GM12878 (cell line): ENCODE measurements at regions of chr1 and their contacts with region 1.

Region 1: DNA sequence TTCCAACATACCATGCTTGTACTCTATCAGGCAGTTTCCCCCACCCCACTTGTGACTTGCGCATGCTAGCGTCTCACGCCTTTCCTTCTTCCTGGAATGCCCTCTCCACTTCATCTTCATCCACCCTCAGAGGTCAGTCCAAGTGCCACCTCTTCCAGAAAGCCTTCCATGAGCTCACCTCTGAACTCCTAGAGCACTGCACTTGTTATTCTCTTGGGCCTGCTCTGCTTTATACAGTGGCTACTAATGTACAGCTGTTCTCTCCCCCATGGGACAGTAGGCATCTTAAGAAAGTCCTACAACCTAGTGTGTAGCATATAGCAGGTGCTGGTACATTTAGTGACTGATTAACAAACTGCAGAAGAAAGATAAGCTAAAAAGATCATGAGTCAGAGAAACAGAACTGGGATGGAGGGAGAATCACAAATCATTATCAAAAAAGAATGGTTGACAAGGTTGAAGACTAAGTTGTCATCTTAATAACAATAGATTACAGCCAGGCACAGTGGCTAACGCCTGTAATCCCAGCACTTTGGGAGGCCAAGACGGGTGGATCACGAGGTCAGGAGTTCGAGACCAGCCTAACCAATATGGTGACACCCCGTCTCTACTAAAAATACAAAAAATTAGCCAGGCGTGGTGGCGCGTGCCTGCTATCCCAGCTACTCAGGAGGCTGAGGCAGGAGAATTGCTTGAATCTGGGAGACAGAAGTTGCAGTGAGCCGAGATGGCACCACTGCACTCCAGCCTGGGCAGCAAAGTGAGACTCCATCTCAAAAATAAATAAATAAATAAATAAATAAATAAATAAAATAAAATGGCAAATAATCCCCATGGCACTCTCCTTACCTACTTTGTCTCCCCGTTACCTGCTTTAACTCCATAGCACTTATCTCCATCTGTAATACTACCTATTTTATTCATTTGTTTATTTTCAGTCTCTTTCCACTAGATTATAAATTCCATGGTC is 16.3 kb upstream of the TSPAN1 start:
- DNase-seq: no peak
- ATAC-seq: peak; percentile 66
- H3K4me3 ChIP-seq: no peak overlapping the region
- H3K27ac ChIP-seq: no peak overlapping the region
- H3K4me1 ChIP-seq: peaks cover 10% of the 10 kb centered on the region
- H3K27me3 ChIP-seq: no peaks in the 10 kb centered on the region
- CTCF ChIP-seq: no peak
- EP300 ChIP-seq: no peak
- POLR2A ChIP-seq: no peak
- RAD21 ChIP-seq: no peak

Region 2: DNA sequence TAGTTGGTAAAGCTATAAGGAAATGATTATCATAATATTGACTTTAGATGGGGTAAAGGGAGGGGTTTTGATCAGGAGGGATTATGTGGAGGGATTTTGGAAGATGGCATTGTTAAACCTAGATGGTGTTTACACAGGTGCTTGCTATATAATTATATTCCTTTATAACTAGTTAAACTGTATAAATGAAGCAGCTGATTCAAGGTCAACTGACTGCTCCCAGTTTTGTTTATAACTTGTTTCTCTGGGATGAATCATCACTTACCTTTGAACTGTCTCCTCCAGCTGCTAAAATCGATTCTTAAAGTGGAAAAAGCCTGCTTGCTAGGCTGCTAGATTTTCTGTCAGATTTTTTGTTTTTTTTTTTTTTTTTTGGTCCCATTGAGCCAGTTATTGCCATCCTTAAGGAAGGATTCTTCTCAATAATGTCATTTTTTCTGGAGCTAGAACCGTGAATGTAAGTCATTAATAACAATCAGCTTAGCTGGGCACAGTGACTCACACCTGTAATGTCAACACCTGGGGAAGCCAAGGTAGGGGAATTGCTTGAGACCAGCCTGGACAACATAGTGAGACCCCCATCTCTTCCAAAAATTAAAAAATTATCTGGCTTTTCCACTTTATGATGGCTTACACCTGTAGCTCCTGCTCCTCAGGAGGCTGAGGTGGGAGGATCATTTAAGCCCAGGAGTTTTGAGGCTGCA is 179.4 kb before region 1 on chr1:
- CTCF ChIA-PET with region 1: no interaction called
- POLR2A ChIA-PET with region 1: no interaction called
- RAD21 ChIA-PET with region 1: no interaction called
- SMC1A ChIA-PET with region 1: no interaction called
- in situ Hi-C with region 1: no loop called
- intact Hi-C with region 1: no loop called
- DNase-seq: no peak
- ATAC-seq: no peak
- H3K4me3 ChIP-seq: no peak overlapping the region
- H3K27ac ChIP-seq: no peak overlapping the region
- H3K4me1 ChIP-seq: no peaks in the 10 kb centered on the region
- H3K27me3 ChIP-seq: no peaks in the 10 kb centered on the region
- CTCF ChIP-seq: no peak
- EP300 ChIP-seq: no peak
- POLR2A ChIP-seq: no peak
- RAD21 ChIP-seq: no peak

Region 3: DNA sequence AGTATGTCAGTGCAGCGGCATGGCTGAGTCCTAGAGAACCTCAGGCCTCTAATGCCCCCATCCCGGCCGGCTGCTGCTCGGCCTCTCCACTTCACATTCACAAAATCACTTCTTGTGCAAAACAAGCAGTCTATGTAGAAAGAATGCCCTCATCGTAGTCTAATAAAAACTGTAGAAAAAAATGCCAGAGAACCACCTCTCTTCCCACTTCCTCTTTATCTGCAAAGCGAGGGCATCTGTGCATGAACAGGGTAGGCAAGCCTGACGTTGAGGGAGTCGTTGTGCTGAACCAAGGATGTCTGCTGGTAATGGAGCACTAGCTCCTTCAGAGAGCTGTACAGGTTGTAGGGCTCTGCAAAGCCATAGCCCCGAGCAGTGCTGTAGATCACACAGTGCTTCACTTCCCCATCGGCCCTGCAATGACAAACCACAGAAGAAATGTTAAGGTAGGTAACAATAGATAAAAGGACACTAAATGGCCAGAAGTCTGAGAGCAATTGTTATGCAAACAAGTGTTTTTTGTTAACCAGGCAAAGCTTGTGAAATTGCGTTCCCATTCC is 115.1 kb before region 1 on chr1:
- CTCF ChIA-PET with region 1: interaction called, 3 read pairs
- POLR2A ChIA-PET with region 1: no interaction called
- RAD21 ChIA-PET with region 1: interaction called, 3 read pairs
- SMC1A ChIA-PET with region 1: interaction called, 12 read pairs
- in situ Hi-C with region 1: no loop called
- intact Hi-C with region 1: no loop called
- DNase-seq: peak; percentile 92
- ATAC-seq: peak; percentile 97
- H3K4me3 ChIP-seq: no peak overlapping the region
- H3K27ac ChIP-seq: peak overlapping the region; percentile 80
- H3K4me1 ChIP-seq: peaks cover 35% of the 10 kb centered on the region
- H3K27me3 ChIP-seq: no peaks in the 10 kb centered on the region
- CTCF ChIP-seq: no peak
- EP300 ChIP-seq: peak in 1 of 2 experiments; percentile 54; a peak in 2 of 4 replicates
- POLR2A ChIP-seq: peak; percentile 52; the same call in 1 of the 2 replicates
- RAD21 ChIP-seq: no peak; the same call in 1 of the 2 replicates

Region 4: DNA sequence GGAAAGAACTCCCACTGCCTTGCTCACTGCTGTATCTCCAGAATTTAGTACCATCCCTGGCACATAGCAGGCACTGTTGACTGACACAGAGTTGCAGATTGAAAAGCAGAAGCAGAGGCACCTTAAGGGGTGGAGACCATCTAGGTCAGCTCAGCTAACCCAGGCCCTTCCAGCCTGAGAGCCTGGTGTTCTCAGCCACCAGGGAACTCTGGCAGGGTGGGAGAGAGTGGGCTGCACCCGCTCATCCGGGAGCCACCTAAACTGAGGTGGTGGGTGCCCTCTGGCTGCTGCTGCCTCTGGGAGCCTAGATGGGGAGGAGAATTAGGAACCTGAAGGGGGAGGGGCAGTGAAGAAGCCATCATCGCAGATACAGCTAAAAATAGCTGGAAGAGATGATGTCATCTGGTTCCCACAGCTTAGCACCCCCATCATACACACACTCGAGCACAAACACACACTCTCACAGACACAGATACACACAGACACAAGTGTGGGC is 14.8 kb after region 1 on chr1:
- CTCF ChIA-PET with region 1: interaction called, 7 read pairs
- POLR2A ChIA-PET with region 1: interaction called, 3 read pairs
- RAD21 ChIA-PET with region 1: interaction called, 3 read pairs
- SMC1A ChIA-PET with region 1: interaction called, 11 read pairs
- in situ Hi-C with region 1: no loop called
- intact Hi-C with region 1: no loop called
- DNase-seq: no peak
- ATAC-seq: peak; percentile 51
- H3K4me3 ChIP-seq: no peak overlapping the region
- H3K27ac ChIP-seq: no peak overlapping the region
- H3K4me1 ChIP-seq: peaks cover 3% of the 10 kb centered on the region
- H3K27me3 ChIP-seq: no peaks in the 10 kb centered on the region; a peak in 1 of 4 replicates
- CTCF ChIP-seq: peak in 1 of 3 experiments; percentile 18; a peak in 1 of 6 replicates
- EP300 ChIP-seq: no peak
- POLR2A ChIP-seq: no peak
- RAD21 ChIP-seq: no peak

Region 5: DNA sequence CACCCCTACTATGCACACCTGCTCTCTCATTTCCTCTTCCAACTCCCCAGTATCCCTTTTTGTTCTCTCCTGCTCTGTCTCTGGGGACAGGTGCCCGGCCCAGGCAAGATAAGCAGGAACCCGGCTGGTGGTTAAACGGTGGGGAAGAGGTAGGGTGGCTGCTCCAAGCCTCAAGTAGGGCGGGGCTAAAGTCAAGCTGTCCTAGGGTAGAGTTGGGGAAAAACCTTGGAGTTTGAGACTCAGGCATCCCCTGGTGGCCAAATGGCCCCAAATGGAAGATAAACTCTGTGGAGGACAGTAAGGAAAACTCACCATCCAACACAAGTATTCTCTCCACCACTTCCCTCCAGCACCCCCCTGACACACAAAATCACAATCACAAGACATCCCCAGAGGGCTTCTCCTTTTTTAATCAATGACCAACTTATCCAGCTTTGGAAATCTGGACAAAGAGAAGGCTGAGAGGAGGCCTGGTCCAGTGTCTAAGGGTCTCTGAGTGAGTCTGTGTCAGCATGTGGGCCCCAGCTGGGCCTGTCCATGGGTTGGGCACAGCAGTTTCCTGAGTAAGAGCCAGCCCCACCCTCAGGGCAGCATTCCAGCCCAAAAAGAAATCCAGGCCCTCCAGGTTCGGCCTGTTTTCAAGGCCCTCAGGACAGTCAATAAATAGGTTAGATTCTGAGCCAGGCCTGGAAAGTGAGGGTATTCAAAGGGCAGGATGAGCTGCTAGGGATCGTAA is 29.9 kb after region 1 on chr1:
- CTCF ChIA-PET with region 1: no interaction called
- POLR2A ChIA-PET with region 1: no interaction called
- RAD21 ChIA-PET with region 1: no interaction called
- SMC1A ChIA-PET with region 1: no interaction called
- in situ Hi-C with region 1: no loop called
- intact Hi-C with region 1: no loop called
- DNase-seq: no peak
- ATAC-seq: no peak
- H3K4me3 ChIP-seq: no peak overlapping the region
- H3K27ac ChIP-seq: no peak overlapping the region
- H3K4me1 ChIP-seq: peaks cover 18% of the 10 kb centered on the region
- H3K27me3 ChIP-seq: no peaks in the 10 kb centered on the region
- CTCF ChIP-seq: 0 out of 6 replicates have a peak, but pooled peaks of 1 of the 3 experiments have one; percentile 8
- EP300 ChIP-seq: no peak
- POLR2A ChIP-seq: no peak
- RAD21 ChIP-seq: no peak

Region 6: DNA sequence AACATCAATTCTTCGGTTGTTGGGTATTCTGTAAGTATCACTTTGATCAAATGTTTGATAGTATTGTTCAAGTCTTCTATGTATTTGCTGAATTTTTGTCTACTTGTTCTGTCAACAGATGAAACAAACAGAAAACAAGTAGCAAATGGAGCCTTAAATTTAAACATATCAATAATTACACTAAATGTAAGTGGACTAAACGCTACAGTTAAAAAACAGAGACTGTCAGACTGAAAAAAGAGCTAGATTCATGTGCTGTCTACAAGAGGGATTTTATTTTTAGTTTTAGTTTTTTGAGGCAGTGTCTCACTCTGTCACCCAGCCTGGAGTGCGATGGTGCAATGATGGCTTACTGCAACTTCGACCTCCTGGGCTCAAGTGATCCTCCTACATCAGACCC is 78.3 kb after region 1 on chr1:
- CTCF ChIA-PET with region 1: no interaction called
- POLR2A ChIA-PET with region 1: no interaction called
- RAD21 ChIA-PET with region 1: no interaction called
- SMC1A ChIA-PET with region 1: no interaction called
- in situ Hi-C with region 1: no loop called
- intact Hi-C with region 1: no loop called
- DNase-seq: no peak
- ATAC-seq: no peak
- H3K4me3 ChIP-seq: no peak overlapping the region
- H3K27ac ChIP-seq: no peak overlapping the region
- H3K4me1 ChIP-seq: no peaks in the 10 kb centered on the region
- H3K27me3 ChIP-seq: no peaks in the 10 kb centered on the region
- CTCF ChIP-seq: no peak
- EP300 ChIP-seq: no peak
- POLR2A ChIP-seq: no peak
- RAD21 ChIP-seq: no peak

Region 7: GRCh38 chr1:46300673-46301405 is 142.2 kb after region 1 on chr1:
- CTCF ChIA-PET with region 1: no interaction called
- POLR2A ChIA-PET with region 1: no interaction called
- RAD21 ChIA-PET with region 1: no interaction called
- SMC1A ChIA-PET with region 1: no interaction called
- in situ Hi-C with region 1: no loop called
- intact Hi-C with region 1: no loop called
- DNase-seq: no peak
- ATAC-seq: no peak
- H3K4me3 ChIP-seq: peak overlapping the region; percentile 98
- H3K27ac ChIP-seq: peak overlapping the region; percentile 84
- H3K4me1 ChIP-seq: peaks cover 5% of the 10 kb centered on the region; the same call in 1 of the 2 replicates
- H3K27me3 ChIP-seq: no peaks in the 10 kb centered on the region
- CTCF ChIP-seq: no peak
- EP300 ChIP-seq: no peak
- POLR2A ChIP-seq: no peak
- RAD21 ChIP-seq: no peak